Sciatic nerve (tissue), 2 donors: ENCODE measurements at regions of chr17 and their contacts with region 1.

Region 1: GRCh38 chr17:40113110-40113906 is 8.5 kb upstream of the MSL1 start:
- DNase-seq: peak; percentile 95
- ATAC-seq: peak; percentile 76

Region 2: GRCh38 chr17:40026816-40027613 is 86.3 kb before region 1 on chr17:
- intact Hi-C with region 1: no loop called
- DNase-seq: peak; percentile 91
- ATAC-seq: peak; percentile 96

Region 3: GRCh38 chr17:40168262-40168832 is 55.0 kb after region 1 on chr17:
- intact Hi-C with region 1: loop called (anchors 10 kb)
- DNase-seq: no peak
- ATAC-seq: peak; percentile 75

Region 4: GRCh38 chr17:41918314-41919164 is 1805.2 kb after region 1 on chr17 and contains the start of gene ACLY:
- intact Hi-C with region 1: loop called (anchors 5 kb)
- DNase-seq: peak; percentile 98
- ATAC-seq: peak; percentile 96
- total RNA-seq, gene ACLY: 139 TPM